ENCODE measurements at regions of chr3 and their contacts with region 1.

Region 1: GRCh38 chr3:184727357-184728009 is 15.6 kb upstream of the MAGEF1 start:
- DNase-seq: peak; percentile 74
- ATAC-seq: peak; percentile 63
- H3K4me3 ChIP-seq: no peak overlapping the region
- H3K4me3 Mint-ChIP-seq: no peak overlapping the region
- H3K27ac ChIP-seq: no peak overlapping the region
- H3K27ac Mint-ChIP-seq: no peak overlapping the region
- H3K4me1 ChIP-seq: no peaks in the 10 kb centered on the region
- H3K4me1 Mint-ChIP-seq: no peaks in the 10 kb centered on the region
- H3K27me3 ChIP-seq: peaks cover 0 to 5% (median 0%) of the 10 kb centered on the region in 4 experiments
- H3K27me3 Mint-ChIP-seq: peaks cover 13% of the 10 kb centered on the region
- CTCF ChIP-seq: peak; percentile 74

Region 2: DNA sequence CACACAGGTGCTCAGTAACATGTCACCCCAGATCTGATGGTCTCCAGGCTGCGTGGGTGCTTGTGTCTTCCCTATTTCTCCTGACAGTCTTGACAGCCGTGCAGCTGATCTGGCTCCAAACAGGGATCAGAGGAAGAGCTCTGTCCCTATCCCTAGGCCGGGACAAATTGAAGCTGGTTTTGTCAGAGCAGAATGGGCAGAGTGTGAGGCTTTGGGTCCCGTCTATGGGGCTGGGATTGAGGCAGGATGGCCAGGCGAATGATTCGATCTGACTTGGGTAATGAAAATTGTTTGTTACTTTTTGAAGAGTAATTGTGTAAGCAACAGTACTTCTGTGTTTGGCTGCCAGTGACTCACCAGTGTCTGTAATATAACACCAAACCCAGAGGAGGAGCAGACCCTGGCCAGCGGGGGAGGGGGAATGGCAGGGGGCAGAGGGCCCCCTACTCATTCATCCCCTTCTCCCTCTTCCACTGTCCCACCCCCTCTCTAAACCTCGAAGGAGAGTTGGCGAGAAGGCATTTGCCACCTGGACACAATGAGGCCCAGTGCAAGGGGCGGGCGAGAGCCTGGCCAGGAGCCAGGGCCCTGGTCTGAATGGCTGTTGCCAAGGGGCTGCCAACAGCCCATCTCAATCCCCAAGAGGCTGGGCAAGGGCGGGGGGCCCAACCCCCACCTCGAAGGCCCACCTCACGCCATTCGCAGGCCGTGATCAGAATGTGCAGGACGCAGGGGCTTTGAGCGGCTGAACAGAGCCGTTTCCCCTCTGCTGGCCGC is 10.7 kb before region 1 on chr3:
- CTCF ChIA-PET with region 1: interaction called, 14 read pairs
- POLR2A ChIA-PET with region 1: no interaction called
- intact Hi-C with region 1: no loop called
- DNase-seq: no peak
- ATAC-seq: no peak
- H3K4me3 ChIP-seq: no peak overlapping the region
- H3K4me3 Mint-ChIP-seq: no peak overlapping the region
- H3K27ac ChIP-seq: no peak overlapping the region
- H3K27ac Mint-ChIP-seq: no peak overlapping the region
- H3K4me1 ChIP-seq: peaks cover 4 to 9% of the 10 kb centered on the region in 2 donors
- H3K4me1 Mint-ChIP-seq: peaks cover 10% of the 10 kb centered on the region
- H3K27me3 ChIP-seq: no peaks in the 10 kb centered on the region
- H3K27me3 Mint-ChIP-seq: no peaks in the 10 kb centered on the region
- CTCF ChIP-seq: no peak

Region 3: GRCh38 chr3:184777336-184778004 is 50.0 kb after region 1 on chr3:
- CTCF ChIA-PET with region 1: interaction called, 8 read pairs
- POLR2A ChIA-PET with region 1: no interaction called
- intact Hi-C with region 1: loop called (anchors 1 kb)
- DNase-seq: peak; percentile 90
- ATAC-seq: peak; percentile 98
- H3K4me3 ChIP-seq: no peak overlapping the region
- H3K4me3 Mint-ChIP-seq: no peak overlapping the region
- H3K27ac ChIP-seq: no peak overlapping the region
- H3K27ac Mint-ChIP-seq: no peak overlapping the region
- H3K4me1 ChIP-seq: no peaks in the 10 kb centered on the region
- H3K4me1 Mint-ChIP-seq: no peaks in the 10 kb centered on the region
- H3K27me3 ChIP-seq: peaks cover 0 to 15% (median 0%) of the 10 kb centered on the region in 4 experiments
- H3K27me3 Mint-ChIP-seq: peaks cover 33% of the 10 kb centered on the region
- CTCF ChIP-seq: peak; percentile 79

Region 4: GRCh38 chr3:185009650-185010049 is 282.2 kb after region 1 on chr3:
- CTCF ChIA-PET with region 1: no interaction called
- POLR2A ChIA-PET with region 1: no interaction called
- intact Hi-C with region 1: no loop called
- DNase-seq: no peak
- ATAC-seq: no peak
- H3K4me3 ChIP-seq: no peak overlapping the region
- H3K4me3 Mint-ChIP-seq: no peak overlapping the region
- H3K27ac ChIP-seq: no peak overlapping the region
- H3K27ac Mint-ChIP-seq: no peak overlapping the region
- H3K4me1 ChIP-seq: no peaks in the 10 kb centered on the region
- H3K4me1 Mint-ChIP-seq: no peaks in the 10 kb centered on the region
- H3K27me3 ChIP-seq: no peaks in the 10 kb centered on the region
- H3K27me3 Mint-ChIP-seq: no peaks in the 10 kb centered on the region
- CTCF ChIP-seq: no peak